Left ventricle myocardium inferior (tissue), 1 donor: ENCODE measurements at regions of chr2 and their contacts with region 1.

Region 1: GRCh38 chr2:157769856-157770255 is 106.3 kb downstream of the ACVR1 start:
- DNase-seq: no peak
- H3K4me3 ChIP-seq: no peak overlapping the region
- H3K27ac ChIP-seq: no peak overlapping the region
- H3K4me1 ChIP-seq: no peaks in the 10 kb centered on the region
- H3K27me3 ChIP-seq: no peaks in the 10 kb centered on the region
- CTCF ChIP-seq: no peak

Region 2: DNA sequence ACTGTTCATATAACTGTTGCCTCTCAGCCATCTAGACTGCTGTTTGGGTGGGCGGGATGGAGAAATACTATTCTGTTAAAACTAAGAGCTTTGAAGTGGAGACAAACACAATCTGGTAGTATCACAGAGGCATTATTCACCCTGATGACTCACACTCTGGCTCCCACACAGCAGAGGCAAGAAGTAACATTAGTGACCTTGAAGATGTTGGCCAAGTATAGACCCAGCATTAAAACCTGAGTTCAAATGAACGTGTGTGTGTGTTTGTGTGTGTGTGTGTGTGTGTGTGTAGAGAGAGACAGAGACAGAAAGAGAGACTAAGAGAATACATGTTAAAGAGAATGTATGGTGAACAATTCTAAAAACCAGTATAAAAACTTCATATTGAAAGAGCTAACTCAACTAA is 128.7 kb after region 1 on chr2:
- intact Hi-C with region 1: loop called (anchors 5 kb)
- DNase-seq: no peak
- H3K4me3 ChIP-seq: no peak overlapping the region
- H3K27ac ChIP-seq: no peak overlapping the region
- H3K4me1 ChIP-seq: peaks cover 13% of the 10 kb centered on the region
- H3K27me3 ChIP-seq: no peaks in the 10 kb centered on the region
- CTCF ChIP-seq: no peak